ENCODE measurements at regions of chr12 and their contacts with region 1.

Region 1: DNA sequence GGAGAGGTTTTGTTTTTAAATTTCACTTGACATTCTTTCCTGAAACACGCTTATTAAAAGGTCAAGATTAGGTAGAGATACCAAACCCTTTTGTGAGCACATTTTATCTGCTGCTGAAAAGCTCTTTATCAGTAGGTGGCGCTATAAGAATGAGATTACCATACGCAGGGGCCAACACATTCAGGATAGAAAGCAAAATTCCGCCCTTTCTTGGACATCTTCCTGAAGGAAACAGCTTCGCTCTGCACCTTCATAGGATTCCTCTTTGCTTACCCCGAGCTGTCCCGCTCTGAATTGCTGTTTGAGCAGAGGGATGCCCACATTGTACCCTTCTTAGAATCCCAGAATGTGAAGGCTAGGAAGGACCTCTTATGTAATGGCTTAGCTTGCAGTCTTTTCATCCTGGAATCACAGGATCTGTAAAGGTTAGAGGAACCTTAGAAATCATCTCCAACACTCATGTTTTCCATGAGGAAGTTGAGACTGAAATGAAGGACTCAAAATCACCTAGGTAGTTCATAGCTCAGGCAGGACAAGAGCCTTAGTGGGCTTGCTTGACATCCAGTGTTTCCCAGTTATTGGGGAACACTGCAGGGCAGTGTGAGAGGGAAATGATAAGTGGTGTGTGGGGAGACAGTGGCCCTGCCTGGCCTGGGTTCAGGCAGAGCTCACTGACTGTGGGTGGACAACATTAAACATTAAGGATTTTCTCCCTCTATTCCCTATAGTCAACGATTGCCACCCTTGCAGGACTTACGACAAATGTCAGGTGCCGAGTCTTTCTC is 38.7 kb upstream of the CRY1 start:
- DNase-seq: peak; percentile 4
- H3K4me3 ChIP-seq: no peak overlapping the region
- CTCF ChIP-seq: peak; percentile 67

Region 2: GRCh38 chr12:106903241-106903945 is 228.6 kb before region 1 on chr12:
- CTCF ChIA-PET with region 1: no interaction called
- POLR2A ChIA-PET with region 1: no interaction called
- DNase-seq: no peak
- H3K4me3 ChIP-seq: peak overlapping the region; percentile 52
- CTCF ChIP-seq: no peak

Region 3: GRCh38 chr12:107111314-107111713 is 20.7 kb before region 1 on chr12:
- CTCF ChIA-PET with region 1: interaction called, 74 read pairs
- POLR2A ChIA-PET with region 1: no interaction called
- DNase-seq: no peak
- H3K4me3 ChIP-seq: no peak overlapping the region
- CTCF ChIP-seq: no peak

Region 4: DNA sequence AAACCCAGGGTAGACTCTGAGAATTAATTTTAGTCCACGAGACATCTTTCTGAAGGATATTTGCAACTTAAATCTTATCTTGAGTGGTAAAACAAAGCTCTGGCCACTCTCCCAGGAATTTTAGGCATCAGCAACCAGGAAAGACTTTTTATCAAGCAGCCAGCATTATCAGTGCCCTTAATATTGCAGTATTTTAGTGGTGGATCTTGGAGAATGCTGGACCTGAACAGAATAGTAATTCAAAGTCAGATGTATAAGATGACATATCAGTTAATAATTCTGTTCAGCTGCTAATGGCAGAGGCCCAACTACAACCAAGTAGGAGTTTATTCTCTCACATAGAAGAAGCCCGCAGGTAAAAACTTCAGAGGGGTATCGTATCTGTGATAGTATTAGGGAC is 20.3 kb after region 1 on chr12:
- CTCF ChIA-PET with region 1: interaction called, 29 read pairs
- POLR2A ChIA-PET with region 1: no interaction called
- DNase-seq: no peak
- H3K4me3 ChIP-seq: no peak overlapping the region
- CTCF ChIP-seq: no peak

Region 5: DNA sequence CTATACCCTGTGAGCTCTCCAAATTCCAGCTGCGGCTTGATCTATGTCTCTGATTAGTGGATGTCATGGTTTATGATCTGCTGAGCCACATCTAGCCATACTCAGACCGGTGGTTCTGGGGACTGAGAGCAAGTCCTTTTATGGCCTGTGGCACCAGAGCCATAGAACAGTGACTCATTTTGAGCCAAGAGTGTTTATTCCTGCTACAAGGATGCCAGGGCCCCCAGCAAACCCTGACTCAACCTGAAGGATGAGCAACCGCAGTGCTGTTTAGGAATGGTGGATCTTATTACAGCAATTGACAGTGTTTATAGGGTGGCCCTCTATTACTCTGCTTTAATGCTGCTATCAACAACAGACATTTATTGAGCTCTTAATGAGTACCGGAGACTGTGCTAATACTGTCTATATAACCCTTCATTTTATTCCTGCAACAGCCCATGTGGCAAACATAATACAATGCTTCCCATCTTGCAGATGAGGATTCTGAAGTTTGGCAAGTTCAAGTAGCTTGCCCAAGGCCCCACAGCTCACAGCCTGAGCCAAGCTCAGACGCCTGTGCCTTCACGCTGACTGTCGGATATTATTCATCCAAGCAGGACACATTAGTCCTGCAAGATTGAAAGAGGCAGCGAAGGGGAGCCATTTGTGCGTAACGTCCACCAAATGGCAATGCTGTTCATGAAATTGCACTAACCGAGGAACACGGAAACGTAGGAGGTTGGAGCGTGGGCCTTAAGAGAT is 279.9 kb after region 1 on chr12:
- CTCF ChIA-PET with region 1: interaction called, 403 read pairs
- POLR2A ChIA-PET with region 1: no interaction called
- DNase-seq: peak; percentile 57
- H3K4me3 ChIP-seq: no peak overlapping the region
- CTCF ChIP-seq: no peak

Region 6: GRCh38 chr12:107458163-107458562 is 326.1 kb after region 1 on chr12:
- CTCF ChIA-PET with region 1: interaction called, 14 read pairs
- POLR2A ChIA-PET with region 1: no interaction called
- DNase-seq: no peak
- H3K4me3 ChIP-seq: no peak overlapping the region
- CTCF ChIP-seq: no peak

Region 7: GRCh38 chr12:107600581-107601144 is 468.6 kb after region 1 on chr12:
- CTCF ChIA-PET with region 1: interaction called, 1,069 read pairs
- POLR2A ChIA-PET with region 1: no interaction called
- DNase-seq: no peak
- H3K4me3 ChIP-seq: no peak overlapping the region
- CTCF ChIP-seq: no peak

Measured in AG04449 (cell line).